ENCODE measurements at regions of chr6 and their contacts with region 1.

Region 1: GRCh38 chr6:89708316-89708715 is 69.8 kb upstream of the LYRM2 start:
- DNase-seq: no peak
- H3K4me3 ChIP-seq: no peak overlapping the region
- H3K27ac ChIP-seq: no peak overlapping the region
- H3K4me1 ChIP-seq: no peaks in the 10 kb centered on the region
- CTCF ChIP-seq: no peak

Region 2: DNA sequence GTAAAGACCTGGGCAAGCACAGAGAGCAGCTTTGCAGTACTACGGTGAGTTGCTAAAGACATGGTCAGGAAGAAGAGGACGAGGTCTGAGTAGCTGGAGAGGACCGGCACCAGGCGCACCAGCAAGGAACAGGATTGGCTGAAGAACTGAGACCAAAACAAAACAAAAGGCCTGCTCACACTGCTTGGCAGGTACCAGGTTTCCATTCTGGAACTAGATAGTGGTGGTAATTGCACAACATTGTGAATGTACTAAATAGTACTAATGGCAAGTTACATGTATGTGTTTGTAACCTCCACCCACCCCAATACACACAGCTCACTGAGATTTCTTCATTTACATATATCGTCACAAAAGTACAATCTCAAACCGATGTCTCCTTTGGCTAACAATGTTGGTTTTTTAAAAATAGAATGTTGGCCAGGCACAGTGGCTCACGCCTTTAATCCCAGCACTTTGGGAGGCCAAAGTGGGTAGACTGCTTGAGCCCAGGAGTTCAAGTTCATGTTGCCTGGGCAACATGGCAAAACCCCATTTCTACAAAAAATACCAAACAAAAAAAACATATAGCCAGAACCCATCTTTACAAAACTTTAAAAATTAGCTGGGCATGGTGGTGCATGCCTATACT is 37.3 kb before region 1 on chr6:
- CTCF ChIA-PET with region 1: no interaction called
- POLR2A ChIA-PET with region 1: no interaction called
- intact Hi-C with region 1: loop called (anchors 5 kb)
- DNase-seq: no peak
- H3K4me3 ChIP-seq: no peak overlapping the region
- H3K27ac ChIP-seq: no peak overlapping the region
- H3K4me1 ChIP-seq: no peaks in the 10 kb centered on the region
- CTCF ChIP-seq: no peak

Region 3: DNA sequence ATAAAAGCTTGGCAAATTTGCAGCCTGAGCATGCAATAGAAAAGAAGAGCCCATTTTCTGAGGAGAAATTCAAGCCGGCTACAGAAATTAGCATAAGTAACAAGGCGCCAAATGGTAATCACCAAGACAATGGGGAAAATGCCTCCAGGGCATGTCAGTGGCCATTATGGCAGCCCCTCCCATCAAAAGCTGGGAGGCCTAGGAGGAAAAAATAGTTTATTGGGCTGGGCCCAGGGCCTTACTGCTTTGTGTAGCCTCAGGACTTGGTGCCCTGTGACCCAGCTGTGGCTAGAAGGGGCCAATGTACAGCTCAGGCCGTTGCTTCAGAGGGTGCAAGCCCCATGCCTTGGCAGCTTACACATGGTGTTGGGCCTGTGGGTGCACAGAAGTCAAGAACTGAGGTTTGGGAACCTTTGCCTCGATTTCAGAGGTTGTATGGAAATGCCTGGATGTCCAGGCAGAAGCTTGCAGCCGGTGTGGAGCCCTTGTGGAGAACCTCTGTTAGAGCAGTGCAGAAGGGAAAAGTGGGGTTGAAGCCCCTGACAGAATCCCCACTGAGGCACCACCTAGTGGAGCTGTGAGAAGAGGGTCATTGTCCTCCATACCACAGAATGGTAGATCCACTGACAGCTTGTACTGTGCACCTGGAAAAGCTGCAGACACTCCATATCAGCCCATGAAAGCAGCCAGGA is 1207.1 kb after region 1 on chr6:
- CTCF ChIA-PET with region 1: no interaction called
- POLR2A ChIA-PET with region 1: no interaction called
- intact Hi-C with region 1: no loop called
- DNase-seq: no peak
- H3K4me3 ChIP-seq: no peak overlapping the region
- H3K27ac ChIP-seq: no peak overlapping the region
- H3K4me1 ChIP-seq: no peaks in the 10 kb centered on the region
- CTCF ChIP-seq: no peak